ENCODE measurements at regions of chr4 and their contacts with region 1.

Region 1: DNA sequence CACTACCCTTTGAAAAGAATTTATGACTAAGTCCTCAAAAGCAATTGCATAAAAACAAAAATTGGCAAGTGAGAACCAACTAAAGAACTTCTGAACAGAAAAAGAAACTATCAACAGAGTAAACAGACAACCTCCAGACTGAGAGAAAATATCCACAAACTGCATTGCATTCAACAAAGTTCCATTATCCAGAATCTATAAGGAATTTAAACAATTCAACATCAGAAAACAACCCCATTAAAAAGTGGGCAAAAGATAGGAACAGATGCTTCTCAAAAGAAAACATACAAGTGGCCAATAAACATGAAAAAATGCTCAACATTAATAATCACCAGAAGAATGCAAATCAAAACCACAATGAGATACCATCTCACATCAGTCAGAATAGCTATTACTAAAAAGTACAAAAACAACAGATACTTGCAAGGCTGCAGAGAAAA is 130.2 kb downstream of the GASK1B start:
- DNase-seq: peak; percentile 17
- ATAC-seq: peak; percentile 29; the same call in 1 of the 2 replicates
- H3K4me3 ChIP-seq: no peak overlapping the region
- H3K27ac ChIP-seq: no peak overlapping the region
- H3K4me1 ChIP-seq: no peaks in the 10 kb centered on the region
- H3K27me3 ChIP-seq: no peaks in the 10 kb centered on the region
- CTCF ChIP-seq: no peak

Region 2: DNA sequence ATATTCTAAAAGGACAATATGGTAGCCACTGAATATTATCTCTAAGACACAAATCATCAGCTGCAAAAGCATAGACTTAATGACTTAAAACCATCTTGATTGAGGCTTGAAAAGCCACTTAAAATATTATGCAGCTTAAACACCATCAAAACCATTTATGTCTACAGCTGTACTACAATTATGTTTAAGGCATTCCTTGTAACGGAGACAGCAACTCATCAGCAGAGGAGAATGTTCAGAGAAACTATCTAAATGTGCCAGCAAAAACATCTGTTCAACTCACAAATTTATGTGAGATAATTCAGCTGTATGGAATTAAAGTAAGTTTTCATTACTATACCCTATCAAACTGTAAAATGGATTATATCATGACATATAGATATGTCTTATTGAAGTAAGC is 1941.0 kb before region 1 on chr4:
- CTCF ChIA-PET with region 1: no interaction called
- POLR2A ChIA-PET with region 1: interaction called, 10 read pairs
- intact Hi-C with region 1: no loop called
- DNase-seq: no peak
- ATAC-seq: no peak
- H3K4me3 ChIP-seq: no peak overlapping the region
- H3K27ac ChIP-seq: no peak overlapping the region
- H3K4me1 ChIP-seq: no peaks in the 10 kb centered on the region
- H3K27me3 ChIP-seq: no peaks in the 10 kb centered on the region
- CTCF ChIP-seq: no peak

Region 3: GRCh38 chr4:157754410-157754809 is 288.2 kb before region 1 on chr4:
- CTCF ChIA-PET with region 1: no interaction called
- POLR2A ChIA-PET with region 1: no interaction called
- intact Hi-C with region 1: no loop called
- DNase-seq: no peak
- ATAC-seq: no peak
- H3K4me3 ChIP-seq: no peak overlapping the region
- H3K27ac ChIP-seq: no peak overlapping the region
- H3K4me1 ChIP-seq: no peaks in the 10 kb centered on the region
- H3K27me3 ChIP-seq: no peaks in the 10 kb centered on the region
- CTCF ChIP-seq: no peak

Region 4: DNA sequence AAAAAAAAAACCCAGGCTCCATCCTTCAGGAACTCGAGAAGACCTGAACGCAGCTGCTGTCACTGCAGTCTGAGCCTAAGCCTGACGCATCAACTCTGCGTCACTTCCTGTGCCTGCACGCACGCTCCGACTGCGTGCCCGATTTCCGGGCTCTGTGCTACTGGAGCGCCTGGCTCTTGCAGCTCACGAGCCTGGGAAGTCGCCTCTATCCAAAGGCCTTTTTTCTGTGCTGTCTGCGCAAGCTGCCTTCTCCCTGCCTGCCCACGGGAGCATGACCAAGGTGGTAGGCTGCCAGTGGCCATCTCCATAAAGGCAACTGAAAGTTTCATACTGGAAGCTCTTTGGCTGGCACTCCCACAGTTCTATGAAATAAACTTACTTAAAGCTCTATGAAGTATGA is 140.1 kb after region 1 on chr4:
- CTCF ChIA-PET with region 1: no interaction called
- POLR2A ChIA-PET with region 1: no interaction called
- intact Hi-C with region 1: no loop called
- DNase-seq: no peak
- ATAC-seq: no peak
- H3K4me3 ChIP-seq: no peak overlapping the region
- H3K27ac ChIP-seq: no peak overlapping the region
- H3K4me1 ChIP-seq: no peaks in the 10 kb centered on the region
- H3K27me3 ChIP-seq: no peaks in the 10 kb centered on the region
- CTCF ChIP-seq: no peak

Measured in PC-3 (cell line).